Activated T-helper 1 cell treated with anti-CD3 and anti-CD28 coated beads, Interleukin-12 subunit alpha, Interleukin-12 subunit beta, Interleukin-2, Interleukin-4 antibody, amounts not matched to agents 30 ng/mL and 10 ng/mL and 1 ng/mL, durations not matched to agents 14 hours and 24 hours and 36 hours (primary cell): ENCODE measurements at regions of chr20 and their contacts with region 1.

Region 1: DNA sequence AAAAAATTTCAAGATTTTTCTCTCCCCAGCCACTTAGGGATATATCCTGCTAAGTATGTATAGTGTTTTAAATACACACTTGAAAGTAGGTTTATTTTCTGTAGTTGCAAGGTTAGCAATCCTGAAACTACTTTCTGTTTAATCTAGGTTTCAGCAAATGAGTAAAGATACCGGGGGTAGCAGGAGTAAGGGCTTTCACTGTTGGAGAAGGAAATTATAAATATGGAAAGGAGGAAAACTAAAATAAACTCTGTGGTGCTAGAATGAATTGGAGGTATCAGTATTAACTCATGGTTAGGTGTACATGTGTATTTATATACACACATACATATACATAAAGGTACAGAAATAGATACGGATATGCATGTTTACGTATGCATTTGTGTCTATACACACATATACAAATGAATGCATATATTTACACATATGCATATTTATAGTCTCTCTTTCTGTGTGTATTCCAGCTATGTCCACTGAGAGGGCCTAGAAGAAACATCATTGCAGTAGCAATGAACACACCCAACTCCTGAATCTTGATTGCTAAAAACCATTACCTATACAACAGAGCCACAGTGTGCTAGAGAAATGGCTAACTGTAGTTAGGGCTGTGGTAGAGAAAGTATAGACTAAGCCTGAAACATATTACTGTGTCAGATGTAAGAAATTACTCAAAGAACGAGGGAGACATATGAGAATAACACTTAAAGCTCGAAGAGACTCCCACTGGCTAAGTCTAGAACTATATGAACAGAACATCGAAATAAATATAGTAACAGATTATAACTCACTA is 95.9 kb upstream of the EMILIN3 start:
- DNase-seq: no peak
- H3K4me3 Mint-ChIP-seq: no peak overlapping the region
- H3K27ac Mint-ChIP-seq: peak overlapping the region; percentile 0
- H3K4me1 Mint-ChIP-seq: peaks cover 20% of the 10 kb centered on the region
- H3K27me3 Mint-ChIP-seq: no peaks in the 10 kb centered on the region

Region 2: DNA sequence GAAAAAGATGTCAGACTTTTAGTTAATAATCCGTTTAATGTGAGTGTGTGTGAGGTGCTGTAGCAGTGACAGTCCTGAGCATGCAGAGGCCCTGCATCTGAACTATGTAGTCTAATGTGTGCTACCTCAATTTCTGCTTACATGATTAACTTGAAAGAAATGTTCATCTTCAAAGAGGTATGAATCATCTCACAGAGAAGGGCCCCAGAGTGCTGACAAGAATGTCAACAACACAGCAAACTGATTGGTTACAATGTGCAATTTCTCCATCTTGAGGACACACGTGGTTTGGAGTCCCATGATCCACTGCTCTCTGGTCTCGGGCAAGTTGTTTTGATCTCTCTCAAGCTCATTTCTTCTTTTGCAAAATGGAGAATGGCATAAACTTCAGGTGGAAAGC is 34.3 kb before region 1 on chr20:
- intact Hi-C with region 1: loop called (anchors 1 kb)
- DNase-seq: peak; percentile 32
- H3K4me3 Mint-ChIP-seq: peak overlapping the region; percentile 69
- H3K27ac Mint-ChIP-seq: peak overlapping the region; percentile 94
- H3K4me1 Mint-ChIP-seq: peaks cover 46% of the 10 kb centered on the region
- H3K27me3 Mint-ChIP-seq: no peaks in the 10 kb centered on the region

Region 3: DNA sequence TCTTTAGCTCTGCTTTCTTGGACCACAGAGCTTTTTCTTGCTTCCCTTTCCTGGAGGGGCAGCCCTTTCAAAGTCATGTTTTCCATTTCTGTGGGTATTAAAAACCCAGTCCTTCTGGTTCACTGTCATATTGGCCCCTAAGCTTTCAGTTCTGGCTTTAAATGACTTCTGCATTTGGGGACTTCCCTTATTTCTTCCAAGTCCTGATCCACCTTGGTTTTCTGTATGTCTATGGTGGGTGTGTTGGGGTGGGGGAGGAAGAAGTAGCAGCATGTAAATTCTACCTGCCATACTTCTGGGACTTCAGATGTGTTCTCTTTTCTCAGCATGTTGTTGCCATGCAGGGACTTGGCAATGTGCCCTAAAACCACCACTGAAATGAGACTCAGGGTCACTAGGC is 18.9 kb before region 1 on chr20:
- intact Hi-C with region 1: loop called (anchors 1 kb)
- DNase-seq: no peak
- H3K4me3 Mint-ChIP-seq: peak overlapping the region; percentile 1
- H3K27ac Mint-ChIP-seq: peak overlapping the region; percentile 84
- H3K4me1 Mint-ChIP-seq: peaks cover 38% of the 10 kb centered on the region
- H3K27me3 Mint-ChIP-seq: peaks cover 2% of the 10 kb centered on the region